Transverse colon (tissue), 4 donors: ENCODE measurements at regions of chr19 and their contacts with region 1.

Region 1: DNA sequence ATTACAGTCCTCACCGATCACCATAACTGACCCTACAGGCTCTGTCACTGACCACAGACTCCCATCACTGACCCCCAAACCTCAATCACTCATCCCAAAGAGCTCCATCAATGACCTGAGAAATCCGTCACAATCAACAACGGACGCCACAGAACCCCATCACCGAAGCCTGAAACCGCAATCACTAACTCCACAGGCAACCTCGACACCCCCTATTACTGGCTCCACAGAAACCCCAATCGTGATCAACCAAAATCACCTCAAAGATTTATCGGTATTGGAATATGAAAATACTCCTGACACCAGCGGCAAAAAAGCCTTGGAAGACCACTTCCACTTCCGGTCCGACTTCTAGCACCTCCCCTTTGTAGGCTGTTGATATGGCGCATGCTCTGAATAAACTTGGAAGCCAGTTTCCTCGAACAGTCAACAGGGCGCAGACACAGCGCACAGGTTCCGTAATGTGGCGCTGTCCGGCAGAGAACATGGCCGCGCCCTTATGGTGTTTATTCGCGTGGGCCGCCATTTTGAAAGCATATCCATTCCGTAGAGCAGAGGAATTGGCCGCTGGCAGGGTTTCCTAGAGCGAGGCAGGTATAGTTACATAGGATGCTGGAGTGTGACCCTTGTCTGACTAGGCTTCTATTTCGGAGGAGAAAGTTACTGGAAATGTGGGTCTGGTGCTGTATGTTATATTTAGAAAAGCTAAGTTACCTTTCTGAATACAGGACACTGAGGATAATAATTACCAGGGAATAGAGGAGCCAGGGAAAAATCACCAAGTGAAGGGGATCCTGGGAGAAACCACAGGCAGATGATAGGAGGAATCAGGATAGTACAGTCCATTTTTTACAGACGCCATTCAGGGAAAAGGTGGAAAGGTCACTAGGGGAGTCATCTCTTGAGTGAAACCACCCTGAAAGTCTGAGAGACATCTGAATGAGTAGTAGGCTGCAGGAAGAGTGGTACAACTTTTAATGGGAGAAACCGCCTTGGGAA is at the start of gene ZNF585A:
- DNase-seq: peak; percentile 92
- H3K4me3 ChIP-seq: peak within 1 kb of the TSS; percentile 52 to 74 (median 58)
- H3K27ac ChIP-seq: peak within 1 kb of the TSS; percentile 62 to 82 (median 76)
- H3K4me1 ChIP-seq: peaks cover 0 to 8% (median 3%) of the 10 kb centered on the region in 4 donors
- H3K27me3 ChIP-seq: no peaks in the 10 kb centered on the region
- CTCF ChIP-seq: peak in 3 of 5 experiments; percentile 21 to 36 (median 29)
- EP300 ChIP-seq: no peak
- POLR2A ChIP-seq: no peak
- total RNA-seq, gene ZNF585A: 2.2 to 12.9 (median 5.3) TPM

Region 2: DNA sequence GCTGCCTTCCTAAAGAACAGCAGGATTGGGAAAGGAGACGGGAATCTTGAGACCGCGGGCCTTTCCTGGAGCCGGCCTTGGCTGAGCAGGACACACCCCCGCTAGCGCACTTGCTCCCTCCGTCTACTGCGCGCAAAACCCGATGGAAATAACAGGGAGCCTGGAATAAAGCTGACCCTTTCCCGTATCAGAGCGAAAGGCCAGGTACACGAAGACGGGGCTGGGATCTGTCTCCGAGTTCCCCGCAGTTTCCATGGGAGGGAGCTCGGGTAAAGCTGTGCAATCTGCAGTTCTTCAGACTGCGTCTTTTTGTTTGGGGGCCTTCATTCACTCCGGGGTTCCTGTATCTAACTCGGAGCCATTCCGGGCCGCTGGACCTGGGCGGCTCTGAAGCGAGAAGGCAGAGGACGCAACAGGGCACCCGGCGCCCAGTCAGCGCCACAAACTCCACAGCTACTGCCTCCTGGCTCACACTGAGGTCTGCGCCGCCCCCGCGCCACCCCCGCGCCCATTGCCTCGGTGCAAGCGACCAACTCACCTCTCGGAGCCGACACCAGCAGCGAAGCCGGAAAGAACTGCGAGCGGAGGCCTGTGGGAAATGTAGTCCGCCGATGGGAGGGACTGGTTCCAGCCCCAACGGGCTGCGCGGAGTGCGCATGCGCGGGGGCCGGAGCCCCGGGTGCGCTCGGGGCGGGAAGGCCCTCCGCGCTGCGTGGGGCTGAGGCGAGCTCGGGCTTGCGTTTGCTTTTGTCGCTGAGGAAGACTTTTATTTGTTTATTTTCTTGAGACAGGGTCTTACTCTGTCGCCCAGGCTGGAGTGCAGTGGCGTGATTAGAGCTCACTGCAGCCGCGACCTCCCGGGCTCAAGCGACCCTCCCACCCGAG is 793.8 kb before region 1 on chr19 and contains the start of gene ZFP14:
- in situ Hi-C with region 1: no loop called
- intact Hi-C with region 1: loop called (anchors 5 kb)
- DNase-seq: peak; percentile 95
- H3K4me3 ChIP-seq: peak within 1 kb of the TSS; percentile 46 to 90 (median 68)
- H3K27ac ChIP-seq: peak within 1 kb of the TSS; percentile 87 to 93 (median 90)
- H3K4me1 ChIP-seq: peaks cover 8 to 13% (median 10%) of the 10 kb centered on the region in 4 donors
- H3K27me3 ChIP-seq: no peaks in the 10 kb centered on the region
- CTCF ChIP-seq: peak in 1 of 5 experiments; percentile 18
- EP300 ChIP-seq: no peak
- POLR2A ChIP-seq: peak; percentile 74
- total RNA-seq, gene ZFP14: 2.2 to 10.3 (median 6.3) TPM